Heart left ventricle (tissue), 16 donors: ENCODE measurements at regions of chr4 and their contacts with region 1.

Region 1: DNA sequence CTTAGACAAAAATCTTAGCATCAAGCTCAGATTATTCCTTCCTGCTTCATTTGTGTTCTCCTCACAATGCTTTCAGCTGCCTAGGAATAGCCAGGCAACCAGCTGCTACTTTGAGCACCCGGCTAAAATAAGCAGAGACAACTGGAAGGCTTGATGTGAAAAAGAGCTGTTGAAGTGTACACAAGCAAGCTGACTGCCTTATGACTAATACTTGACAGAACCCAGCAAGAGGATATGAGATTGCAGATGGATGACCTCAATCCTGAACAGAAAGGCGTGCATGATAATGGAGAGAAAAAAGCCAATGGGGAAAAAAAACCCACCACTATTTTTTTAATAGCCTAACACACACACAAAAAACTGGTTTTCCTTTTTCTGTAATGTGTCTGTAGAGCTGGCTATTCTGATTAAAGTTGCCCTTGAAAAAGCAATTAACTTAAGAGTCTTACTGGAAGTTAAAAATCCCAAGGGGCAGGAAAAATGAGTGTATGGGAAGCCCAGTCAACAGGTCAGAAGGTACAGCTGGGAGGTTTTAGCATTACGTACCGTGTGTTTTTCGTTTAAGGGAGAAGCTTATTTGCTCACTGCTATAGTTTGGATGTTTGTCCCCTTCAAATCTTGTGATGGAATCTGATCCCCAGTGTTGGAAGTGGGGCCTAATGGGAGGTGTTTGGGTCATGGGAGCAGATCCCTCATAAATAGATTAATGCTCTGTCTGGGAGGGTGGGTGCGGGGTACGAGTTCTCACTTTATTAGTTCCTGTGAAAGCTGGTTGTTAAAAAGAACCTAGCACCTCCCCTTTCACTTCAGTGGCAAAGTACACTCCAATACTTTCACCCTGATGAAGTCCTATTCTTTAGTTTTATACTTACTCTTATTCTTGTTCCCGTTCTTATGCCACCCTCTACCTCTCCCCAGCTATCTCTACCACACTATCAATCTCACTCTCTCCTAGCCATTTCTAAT is 37.1 kb upstream of the HERC6 start:
- DNase-seq: peak in 4 of 5 donors; percentile 47 to 62 (median 54)
- ATAC-seq: peak; percentile 96 to 99 (median 98)
- H3K4me3 ChIP-seq: no peak overlapping the region
- H3K27ac ChIP-seq: peak overlapping the region; percentile 64 to 88 (median 82)
- H3K4me1 ChIP-seq: peaks cover 0 to 22% (median 11%) of the 10 kb centered on the region in 12 donors
- H3K27me3 ChIP-seq: no peaks in the 10 kb centered on the region
- CTCF ChIP-seq: no peak
- POLR2A ChIP-seq: no peak

Region 2: DNA sequence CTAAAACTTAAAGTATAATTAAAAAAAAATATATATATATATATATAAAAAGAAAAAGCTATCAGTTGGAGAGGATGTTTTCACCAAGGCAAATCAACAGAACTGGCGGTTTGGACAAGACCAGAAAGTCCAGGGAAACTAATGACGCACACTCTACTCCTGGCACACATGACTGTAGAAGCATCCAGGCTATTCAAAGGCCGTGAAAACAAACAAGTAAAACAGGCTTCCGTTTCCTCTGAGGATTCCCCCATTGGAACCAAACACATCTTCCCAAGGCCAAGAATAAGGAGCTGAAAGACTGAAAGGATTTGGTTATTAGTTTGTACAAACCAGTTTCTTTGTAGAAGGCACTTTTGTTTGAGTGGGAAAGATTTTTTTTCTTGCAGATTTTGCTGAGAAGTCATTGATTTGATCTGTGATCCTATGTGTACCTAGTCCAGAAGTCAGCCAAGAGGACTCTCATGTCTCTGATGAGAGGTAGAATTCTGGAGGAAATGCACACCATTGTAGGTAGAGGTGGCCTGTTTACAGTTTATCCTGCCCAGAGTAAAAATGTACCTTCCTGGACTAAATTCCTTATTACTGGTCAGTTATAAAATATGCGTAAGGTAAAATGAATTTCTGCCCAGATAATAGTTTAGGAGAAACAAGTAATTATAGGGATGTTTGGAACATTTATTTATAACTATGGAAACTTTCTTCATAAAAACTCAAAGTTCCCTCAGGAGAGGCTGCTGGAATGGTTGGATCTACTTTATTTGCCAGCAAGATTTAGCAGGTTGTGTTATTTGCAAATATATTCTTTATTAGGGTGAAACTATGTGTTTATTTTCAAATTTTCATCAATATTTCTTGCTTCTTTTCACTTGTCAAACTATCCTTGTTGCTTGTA is 624.9 kb before region 1 on chr4:
- intact Hi-C with region 1: no loop called
- DNase-seq: peak in 4 of 5 donors; percentile 48 to 77 (median 65)
- ATAC-seq: peak; percentile 86 to 95 (median 90)
- H3K4me3 ChIP-seq: no peak overlapping the region
- H3K27ac ChIP-seq: peak overlapping the region; percentile 61 to 94 (median 77)
- H3K4me1 ChIP-seq: peaks cover 0 to 29% (median 15%) of the 10 kb centered on the region in 12 donors
- H3K27me3 ChIP-seq: no peaks in the 10 kb centered on the region
- CTCF ChIP-seq: no peak
- POLR2A ChIP-seq: no peak

Region 3: DNA sequence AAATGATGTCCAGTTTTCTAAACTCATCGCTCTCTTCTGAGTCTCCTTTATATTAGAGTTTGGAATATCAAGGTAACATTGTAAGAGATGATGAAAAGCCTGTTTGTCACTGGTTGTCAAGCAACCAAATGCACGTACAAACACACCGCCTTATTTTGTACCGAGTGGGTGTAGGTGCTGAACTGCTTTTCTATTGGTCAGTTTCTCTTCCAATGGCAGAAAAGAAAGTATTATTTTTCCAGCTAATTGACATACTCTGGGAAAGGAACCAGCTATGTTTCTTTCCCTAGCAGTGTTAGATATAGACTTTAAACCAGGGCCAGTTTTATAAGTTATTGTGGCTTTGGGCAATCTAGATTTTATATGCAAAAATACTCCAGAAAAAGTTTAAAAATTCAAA is 50.5 kb before region 1 on chr4:
- intact Hi-C with region 1: loop called in 8 of 10 experiments (anchors 5 to 10 kb)
- DNase-seq: peak in 2 of 5 donors; percentile 35 to 48
- ATAC-seq: peak; percentile 83 to 88 (median 86)
- H3K4me3 ChIP-seq: no peak overlapping the region
- H3K27ac ChIP-seq: peak overlapping the region; percentile 56 to 97 (median 82)
- H3K4me1 ChIP-seq: peaks cover 0 to 55% (median 7%) of the 10 kb centered on the region in 12 donors
- H3K27me3 ChIP-seq: no peaks in the 10 kb centered on the region
- CTCF ChIP-seq: no peak
- POLR2A ChIP-seq: peak in 1 of 2 donors; percentile 39